Activated naive CD4-positive, alpha-beta T cell treated with anti-CD3 and anti-CD28 coated beads for 36 hours (primary cell): ENCODE measurements at regions of chr2 and their contacts with region 1.

Region 1: GRCh38 chr2:144230448-144231085 is 289.4 kb downstream of the ZEB2 start:
- DNase-seq: peak; percentile 7
- H3K4me3 Mint-ChIP-seq: no peak overlapping the region
- H3K27ac Mint-ChIP-seq: peak overlapping the region; percentile 64
- H3K4me1 Mint-ChIP-seq: peaks cover 23% of the 10 kb centered on the region
- H3K27me3 Mint-ChIP-seq: no peaks in the 10 kb centered on the region

Region 2: GRCh38 chr2:144215701-144216675 is 14.6 kb before region 1 on chr2:
- CTCF ChIA-PET with region 1: no interaction called
- intact Hi-C with region 1: loop called (anchors 2 kb)
- DNase-seq: no peak
- H3K4me3 Mint-ChIP-seq: no peak overlapping the region
- H3K27ac Mint-ChIP-seq: peak overlapping the region; percentile 80
- H3K4me1 Mint-ChIP-seq: peaks cover 38% of the 10 kb centered on the region
- H3K27me3 Mint-ChIP-seq: no peaks in the 10 kb centered on the region

Region 3: GRCh38 chr2:144267239-144267638 is 36.7 kb after region 1 on chr2:
- CTCF ChIA-PET with region 1: no interaction called
- intact Hi-C with region 1: loop called (anchors 5 kb)
- DNase-seq: peak; percentile 19
- H3K4me3 Mint-ChIP-seq: no peak overlapping the region
- H3K27ac Mint-ChIP-seq: no peak overlapping the region
- H3K4me1 Mint-ChIP-seq: peaks cover 22% of the 10 kb centered on the region
- H3K27me3 Mint-ChIP-seq: no peaks in the 10 kb centered on the region